MCF 10A (cell line): ENCODE measurements at regions of chr6 and their contacts with region 1.

Region 1: DNA sequence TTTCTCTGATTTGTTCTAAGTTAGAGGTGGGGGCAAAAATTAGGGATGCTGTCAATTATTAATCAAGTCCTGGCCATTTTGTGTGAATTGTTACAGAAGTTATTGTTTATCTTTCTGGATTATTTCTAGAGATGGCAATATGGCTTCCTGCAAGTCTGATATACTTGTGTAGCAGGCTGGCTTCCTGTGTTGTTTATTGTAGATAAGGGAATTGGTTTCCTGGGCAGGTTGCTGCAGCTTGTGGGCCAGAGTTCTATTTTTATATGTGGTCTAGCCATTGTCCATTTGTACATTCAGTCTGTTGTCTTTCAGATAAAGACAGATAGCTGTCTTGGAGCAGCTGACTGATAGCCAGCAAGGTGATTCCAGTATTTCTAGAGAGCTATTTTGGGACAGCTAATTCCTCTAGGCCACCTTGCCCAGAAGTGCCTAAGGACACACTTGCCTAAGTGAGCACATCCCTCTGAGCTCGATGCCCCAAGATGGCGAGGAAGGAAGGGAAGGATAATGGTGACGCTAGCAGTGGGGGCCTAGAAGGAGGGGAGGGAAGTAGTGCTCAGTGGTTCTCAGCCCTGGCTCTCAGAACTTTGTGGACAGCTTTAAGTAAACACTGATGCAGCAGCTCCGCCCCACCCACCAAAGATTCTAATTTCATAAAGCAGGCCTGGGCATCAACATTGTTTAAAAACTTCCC is 25.5 kb downstream of the DDO start:
- DNase-seq: no peak
- H3K4me3 Mint-ChIP-seq: no peak overlapping the region
- H3K27ac Mint-ChIP-seq: no peak overlapping the region
- H3K4me1 Mint-ChIP-seq: no peaks in the 10 kb centered on the region
- H3K27me3 Mint-ChIP-seq: no peaks in the 10 kb centered on the region
- CTCF ChIP-seq: no peak

Region 2: DNA sequence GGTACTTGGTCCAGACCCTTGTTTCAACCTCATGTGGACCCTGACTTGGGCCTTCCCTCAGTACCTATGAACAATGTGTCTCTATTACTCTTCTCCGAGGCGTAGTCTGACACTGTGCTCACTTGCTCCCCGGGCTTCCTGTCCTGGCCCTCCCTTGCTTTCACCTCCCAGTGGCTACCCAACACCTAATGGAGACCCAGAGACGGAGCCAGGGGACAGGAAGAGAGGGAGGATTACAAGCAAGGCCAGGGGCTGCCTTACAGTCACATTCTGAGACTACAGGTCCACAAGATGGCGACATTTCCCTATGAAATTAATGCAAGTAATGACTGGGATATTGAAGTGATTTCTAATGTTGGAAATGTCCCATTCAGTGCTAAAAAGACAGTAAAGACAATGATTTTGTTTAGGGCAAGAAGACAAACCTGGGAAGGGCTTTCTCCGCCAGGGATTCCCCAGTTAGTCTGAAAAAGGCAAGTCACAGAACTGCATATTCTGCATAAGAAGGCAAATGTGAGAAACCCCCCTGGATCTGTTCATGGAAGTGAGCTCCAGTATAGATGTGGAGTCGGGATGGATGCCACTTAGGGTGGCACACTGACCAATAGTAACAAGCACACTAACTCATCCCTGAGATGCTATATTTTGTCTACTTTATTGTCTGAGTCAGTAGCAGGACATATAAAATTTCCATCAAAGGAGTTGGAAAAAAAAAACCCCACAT is 862.8 kb before region 1 on chr6:
- CTCF ChIA-PET with region 1: interaction called, 28 read pairs
- POLR2A ChIA-PET with region 1: no interaction called
- intact Hi-C with region 1: loop called (anchors 2 kb)
- DNase-seq: peak; percentile 80
- H3K4me3 Mint-ChIP-seq: no peak overlapping the region
- H3K27ac Mint-ChIP-seq: no peak overlapping the region
- H3K4me1 Mint-ChIP-seq: peaks cover 6% of the 10 kb centered on the region
- H3K27me3 Mint-ChIP-seq: peaks cover 2% of the 10 kb centered on the region
- CTCF ChIP-seq: peak; percentile 70

Region 3: DNA sequence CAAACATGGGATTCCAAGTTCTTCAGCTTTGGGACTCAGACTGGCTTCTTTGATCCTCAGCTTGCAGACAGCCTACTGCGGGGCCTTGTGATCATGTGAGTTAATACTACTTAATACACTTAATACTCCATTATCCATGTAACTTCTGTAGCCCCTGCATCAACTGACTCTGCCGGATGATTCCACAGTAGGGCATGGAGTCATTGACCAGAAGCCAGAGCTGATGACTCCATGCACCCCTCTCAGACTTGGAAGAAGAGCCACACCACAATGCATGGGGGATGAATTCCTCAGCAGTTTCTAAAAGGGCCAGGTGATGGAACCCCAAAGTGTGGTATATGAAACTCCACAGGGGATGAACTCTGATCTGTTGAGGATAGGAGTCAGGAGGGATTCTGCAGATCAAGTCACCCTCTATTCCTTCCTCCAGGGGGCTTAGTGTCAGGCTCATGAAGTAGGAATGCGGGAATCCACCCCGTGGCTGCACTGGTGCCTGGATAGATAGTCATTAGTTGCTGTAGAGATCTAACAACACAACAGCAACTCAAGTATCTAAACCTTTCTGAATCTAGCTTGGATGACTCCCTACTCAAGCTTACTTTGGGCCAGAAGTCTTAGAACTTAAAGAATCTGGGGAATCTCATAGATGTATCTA is 341.5 kb before region 1 on chr6:
- CTCF ChIA-PET with region 1: interaction called, 26 read pairs
- POLR2A ChIA-PET with region 1: no interaction called
- intact Hi-C with region 1: loop called (anchors 1 kb)
- DNase-seq: no peak
- H3K4me3 Mint-ChIP-seq: no peak overlapping the region
- H3K27ac Mint-ChIP-seq: no peak overlapping the region
- H3K4me1 Mint-ChIP-seq: no peaks in the 10 kb centered on the region
- H3K27me3 Mint-ChIP-seq: no peaks in the 10 kb centered on the region
- CTCF ChIP-seq: no peak

Region 4: DNA sequence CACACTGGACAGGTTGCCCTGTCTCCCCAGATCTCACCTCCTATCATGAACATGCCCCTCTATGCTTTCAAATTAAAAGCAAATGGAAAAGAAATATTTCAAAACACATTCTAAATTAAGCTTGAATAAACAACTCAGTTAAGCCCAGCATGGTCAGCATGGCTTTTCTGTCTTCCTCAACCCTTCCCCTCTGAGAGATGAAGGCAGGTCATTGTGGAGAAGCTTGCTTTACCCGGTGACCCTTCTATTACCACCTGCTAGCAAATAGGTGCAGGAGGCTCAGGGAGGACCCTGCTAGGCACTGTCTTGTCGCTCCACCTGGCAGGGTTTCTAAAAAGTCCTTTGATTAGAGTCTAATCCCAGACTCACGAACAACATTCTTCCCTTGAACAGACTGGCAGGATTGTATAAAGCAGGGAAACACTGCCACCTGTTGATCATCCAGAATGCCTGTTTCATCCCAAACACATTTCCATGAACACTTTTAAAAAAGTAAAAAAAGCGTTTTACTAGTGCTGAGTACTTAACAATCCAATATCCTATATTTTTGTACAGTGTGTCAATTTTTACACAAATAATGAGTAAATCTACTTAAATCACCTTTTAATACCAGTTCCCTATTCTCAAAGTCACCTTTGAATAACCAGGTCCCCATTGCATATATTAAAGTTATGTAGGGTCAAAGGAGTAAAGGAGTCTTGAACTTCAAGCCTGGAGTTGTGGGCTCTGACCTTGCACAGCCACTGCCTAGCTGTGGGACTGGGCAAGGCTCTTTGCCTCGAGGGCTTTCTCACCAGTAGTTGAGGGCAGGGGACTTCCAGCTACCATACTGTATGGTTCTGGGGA is 336.2 kb before region 1 on chr6:
- CTCF ChIA-PET with region 1: interaction called, 26 read pairs
- POLR2A ChIA-PET with region 1: no interaction called
- intact Hi-C with region 1: loop called (anchors 1 kb)
- DNase-seq: peak; percentile 71
- H3K4me3 Mint-ChIP-seq: no peak overlapping the region
- H3K27ac Mint-ChIP-seq: no peak overlapping the region
- H3K4me1 Mint-ChIP-seq: no peaks in the 10 kb centered on the region
- H3K27me3 Mint-ChIP-seq: peaks cover 11% of the 10 kb centered on the region
- CTCF ChIP-seq: peak; percentile 65

Region 5: GRCh38 chr6:110098511-110099116 is 291.2 kb before region 1 on chr6:
- CTCF ChIA-PET with region 1: interaction called, 19 read pairs
- POLR2A ChIA-PET with region 1: no interaction called
- intact Hi-C with region 1: no loop called
- DNase-seq: peak; percentile 92
- H3K4me3 Mint-ChIP-seq: peak overlapping the region; percentile 47
- H3K27ac Mint-ChIP-seq: peak overlapping the region; percentile 85
- H3K4me1 Mint-ChIP-seq: peaks cover 47% of the 10 kb centered on the region
- H3K27me3 Mint-ChIP-seq: no peaks in the 10 kb centered on the region
- CTCF ChIP-seq: no peak

Region 6: GRCh38 chr6:110298916-110299315 is 90.9 kb before region 1 on chr6:
- CTCF ChIA-PET with region 1: no interaction called
- POLR2A ChIA-PET with region 1: no interaction called
- intact Hi-C with region 1: no loop called
- DNase-seq: no peak
- H3K4me3 Mint-ChIP-seq: no peak overlapping the region
- H3K27ac Mint-ChIP-seq: no peak overlapping the region
- H3K4me1 Mint-ChIP-seq: no peaks in the 10 kb centered on the region
- H3K27me3 Mint-ChIP-seq: peaks cover 80% of the 10 kb centered on the region
- CTCF ChIP-seq: no peak

Region 7: GRCh38 chr6:110331816-110332215 is 58.0 kb before region 1 on chr6:
- CTCF ChIA-PET with region 1: no interaction called
- POLR2A ChIA-PET with region 1: no interaction called
- intact Hi-C with region 1: no loop called
- DNase-seq: no peak
- H3K4me3 Mint-ChIP-seq: no peak overlapping the region
- H3K27ac Mint-ChIP-seq: no peak overlapping the region
- H3K4me1 Mint-ChIP-seq: no peaks in the 10 kb centered on the region
- H3K27me3 Mint-ChIP-seq: no peaks in the 10 kb centered on the region
- CTCF ChIP-seq: no peak

Region 8: GRCh38 chr6:110410511-110410910 is 20.7 kb after region 1 on chr6:
- CTCF ChIA-PET with region 1: interaction called, 10 read pairs
- POLR2A ChIA-PET with region 1: no interaction called
- intact Hi-C with region 1: no loop called
- DNase-seq: no peak
- H3K4me3 Mint-ChIP-seq: no peak overlapping the region
- H3K27ac Mint-ChIP-seq: no peak overlapping the region
- H3K4me1 Mint-ChIP-seq: no peaks in the 10 kb centered on the region
- H3K27me3 Mint-ChIP-seq: no peaks in the 10 kb centered on the region
- CTCF ChIP-seq: no peak

Region 9: DNA sequence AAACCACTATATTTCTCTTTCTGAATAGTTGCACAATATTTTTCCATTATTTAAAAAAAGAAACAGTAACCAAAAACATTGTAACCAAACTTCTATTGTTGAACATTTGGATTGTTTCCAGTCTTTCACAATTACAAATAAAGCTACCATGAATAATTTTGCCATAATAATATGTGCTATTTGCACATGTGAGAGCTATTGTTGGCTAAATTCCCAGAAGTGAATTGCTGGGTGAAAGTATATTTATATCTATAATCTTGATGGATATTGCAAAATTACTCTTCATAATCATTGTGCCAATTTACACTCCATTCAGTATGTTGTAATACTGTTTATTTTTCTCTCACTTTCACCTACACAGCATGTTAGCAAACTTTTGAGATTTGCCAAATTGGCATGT is 123.1 kb after region 1 on chr6:
- CTCF ChIA-PET with region 1: no interaction called
- POLR2A ChIA-PET with region 1: no interaction called
- intact Hi-C with region 1: no loop called
- DNase-seq: peak; percentile 92
- H3K4me3 Mint-ChIP-seq: no peak overlapping the region
- H3K27ac Mint-ChIP-seq: no peak overlapping the region
- H3K4me1 Mint-ChIP-seq: peaks cover 27% of the 10 kb centered on the region
- H3K27me3 Mint-ChIP-seq: no peaks in the 10 kb centered on the region
- CTCF ChIP-seq: no peak